ENCODE measurements at regions of chr10 and their contacts with region 1.

Region 1: GRCh38 chr10:125982260-125982948 is 86.0 kb downstream of the FANK1 start:
- DNase-seq: peak; percentile 64
- ATAC-seq: peak; percentile 85
- H3K4me3 ChIP-seq: no peak overlapping the region
- H3K27ac ChIP-seq: peak overlapping the region; percentile 56
- H3K4me1 ChIP-seq: no peaks in the 10 kb centered on the region
- H3K27me3 ChIP-seq: no peaks in the 10 kb centered on the region
- CTCF ChIP-seq: peak; percentile 75

Region 2: GRCh38 chr10:126387023-126387921 is 404.9 kb after region 1 on chr10:
- CTCF ChIA-PET with region 1: no interaction called
- POLR2A ChIA-PET with region 1: no interaction called
- in situ Hi-C with region 1: no loop called
- intact Hi-C with region 1: loop called (anchors 10 kb)
- DNase-seq: no peak
- ATAC-seq: peak; percentile 65
- H3K4me3 ChIP-seq: peak overlapping the region in 1 of 2 experiments; percentile 33; a peak in 1 of 4 replicates
- H3K27ac ChIP-seq: no peak overlapping the region
- H3K4me1 ChIP-seq: peaks cover 9% of the 10 kb centered on the region; the same call in 1 of the 2 replicates
- H3K27me3 ChIP-seq: no peaks in the 10 kb centered on the region
- CTCF ChIP-seq: peak; percentile 84

Region 3: GRCh38 chr10:126500871-126501270 is 518.5 kb after region 1 on chr10:
- CTCF ChIA-PET with region 1: no interaction called
- POLR2A ChIA-PET with region 1: no interaction called
- in situ Hi-C with region 1: no loop called
- intact Hi-C with region 1: loop called (anchors 2 kb)
- DNase-seq: no peak
- ATAC-seq: no peak
- H3K4me3 ChIP-seq: no peak overlapping the region
- H3K27ac ChIP-seq: no peak overlapping the region
- H3K4me1 ChIP-seq: no peaks in the 10 kb centered on the region
- H3K27me3 ChIP-seq: no peaks in the 10 kb centered on the region
- CTCF ChIP-seq: no peak

Region 4: DNA sequence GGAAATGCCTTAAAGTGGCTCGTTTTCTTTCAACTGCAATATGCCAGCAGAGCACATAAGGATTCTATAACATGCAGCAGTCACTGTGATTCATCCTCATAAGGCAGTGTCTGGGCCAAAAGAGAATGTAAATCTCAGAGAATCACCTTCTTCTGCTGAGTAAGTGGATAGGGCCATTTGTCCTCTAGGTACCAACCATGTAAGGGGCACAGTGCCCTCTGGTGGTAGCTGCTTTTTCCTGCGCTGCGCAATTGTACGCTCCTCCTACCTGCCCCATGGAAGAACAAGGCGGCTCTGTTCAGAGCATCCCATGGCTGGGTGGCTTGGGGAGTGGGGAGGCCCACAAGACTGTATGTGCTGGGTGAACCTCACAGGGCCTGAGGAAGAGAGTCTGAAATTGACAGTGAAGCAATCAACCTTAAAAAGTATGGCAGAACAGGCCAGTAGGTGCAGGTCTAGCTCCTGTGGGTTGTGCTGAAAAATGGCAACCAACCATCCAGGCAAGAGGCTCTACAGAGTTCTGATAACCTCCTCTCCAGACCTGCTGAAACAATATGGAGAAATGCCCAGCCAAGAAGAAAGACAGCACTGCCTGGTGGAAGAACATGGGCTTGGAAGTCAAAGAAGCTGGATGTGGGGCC is 766.7 kb after region 1 on chr10:
- CTCF ChIA-PET with region 1: no interaction called
- POLR2A ChIA-PET with region 1: no interaction called
- in situ Hi-C with region 1: no loop called
- intact Hi-C with region 1: loop called (anchors 2 kb)
- DNase-seq: peak; percentile 53
- ATAC-seq: peak; percentile 100
- H3K4me3 ChIP-seq: no peak overlapping the region
- H3K27ac ChIP-seq: no peak overlapping the region
- H3K4me1 ChIP-seq: no peaks in the 10 kb centered on the region
- H3K27me3 ChIP-seq: no peaks in the 10 kb centered on the region
- CTCF ChIP-seq: peak; percentile 92